Activated T-helper 1 cell treated with anti-CD3 and anti-CD28 coated beads, Interleukin-12 subunit alpha, Interleukin-12 subunit beta, Interleukin-2, Interleukin-4 antibody, amounts not matched to agents 30 ng/mL and 10 ng/mL and 1 ng/mL, durations not matched to agents 14 hours and 24 hours and 36 hours (primary cell): ENCODE measurements at regions of chr19 and their contacts with region 1.

Region 1: GRCh38 chr19:56066152-56067023 is 54.7 kb downstream of the ZNF787 start:
- DNase-seq: peak; percentile 51
- H3K4me3 Mint-ChIP-seq: peak overlapping the region; percentile 61
- H3K27ac Mint-ChIP-seq: no peak overlapping the region
- H3K4me1 Mint-ChIP-seq: peaks cover 11% of the 10 kb centered on the region
- H3K27me3 Mint-ChIP-seq: peaks cover 3% of the 10 kb centered on the region

Region 2: DNA sequence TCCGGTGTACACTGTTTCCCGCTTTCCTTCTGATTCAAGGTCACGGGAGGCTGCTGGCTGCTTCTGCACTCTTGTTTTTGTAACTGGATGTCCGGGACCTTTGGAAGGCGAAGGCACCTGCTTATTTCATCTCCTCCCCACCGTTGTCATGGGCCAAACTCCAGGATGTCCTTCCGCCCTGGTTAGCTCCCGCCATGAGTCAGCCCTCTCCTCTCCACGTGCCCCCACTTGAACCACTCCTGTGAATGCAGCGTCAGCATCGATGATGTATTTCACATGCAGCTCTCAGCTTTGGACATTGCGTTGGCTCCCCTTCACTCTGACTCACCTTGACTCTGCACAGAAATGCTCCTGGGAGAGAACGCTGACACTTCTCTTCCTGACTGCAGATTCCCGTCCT is 103.9 kb after region 1 on chr19:
- intact Hi-C with region 1: loop called (anchors 1 kb)
- DNase-seq: no peak
- H3K4me3 Mint-ChIP-seq: no peak overlapping the region
- H3K27ac Mint-ChIP-seq: no peak overlapping the region
- H3K4me1 Mint-ChIP-seq: no peaks in the 10 kb centered on the region
- H3K27me3 Mint-ChIP-seq: peaks cover 4% of the 10 kb centered on the region

Region 3: DNA sequence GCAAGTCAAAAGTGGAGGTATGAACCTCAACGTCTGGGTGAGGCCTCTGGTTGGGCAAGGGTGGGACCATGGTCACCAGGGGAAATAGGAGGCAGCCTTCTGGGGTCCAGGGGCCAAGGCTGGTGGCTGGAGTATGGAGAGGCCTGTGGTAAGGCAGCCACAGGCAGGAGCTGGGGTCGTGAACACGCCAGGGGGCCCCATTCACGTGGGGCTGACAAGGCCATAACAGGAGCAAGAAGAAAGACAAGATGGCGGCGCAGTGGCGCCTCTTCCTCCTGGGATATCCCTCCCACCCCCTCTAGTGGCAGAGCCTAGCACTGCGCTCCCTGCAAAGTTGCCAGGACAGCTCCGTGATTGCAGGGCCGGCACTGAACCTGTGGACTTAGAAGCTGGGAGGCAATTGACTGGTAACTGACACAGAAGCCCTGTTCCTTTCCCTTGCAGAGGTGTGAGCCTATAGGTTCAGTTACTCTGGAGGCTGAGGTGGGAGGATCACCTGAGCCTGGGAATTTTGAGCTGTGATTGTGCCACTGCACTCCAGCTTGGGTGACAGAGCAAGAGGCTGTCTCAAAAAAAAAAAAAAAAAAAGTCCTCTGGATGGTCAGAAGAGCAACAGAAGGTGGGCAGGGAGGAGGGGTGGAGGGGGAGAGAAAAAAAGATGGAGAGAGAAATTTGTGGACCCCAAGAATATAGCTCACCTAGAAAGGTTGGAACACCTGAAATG is 186.5 kb after region 1 on chr19:
- intact Hi-C with region 1: loop called (anchors 2 kb)
- DNase-seq: peak; percentile 45
- H3K4me3 Mint-ChIP-seq: no peak overlapping the region
- H3K27ac Mint-ChIP-seq: no peak overlapping the region
- H3K4me1 Mint-ChIP-seq: no peaks in the 10 kb centered on the region
- H3K27me3 Mint-ChIP-seq: no peaks in the 10 kb centered on the region

Region 4: DNA sequence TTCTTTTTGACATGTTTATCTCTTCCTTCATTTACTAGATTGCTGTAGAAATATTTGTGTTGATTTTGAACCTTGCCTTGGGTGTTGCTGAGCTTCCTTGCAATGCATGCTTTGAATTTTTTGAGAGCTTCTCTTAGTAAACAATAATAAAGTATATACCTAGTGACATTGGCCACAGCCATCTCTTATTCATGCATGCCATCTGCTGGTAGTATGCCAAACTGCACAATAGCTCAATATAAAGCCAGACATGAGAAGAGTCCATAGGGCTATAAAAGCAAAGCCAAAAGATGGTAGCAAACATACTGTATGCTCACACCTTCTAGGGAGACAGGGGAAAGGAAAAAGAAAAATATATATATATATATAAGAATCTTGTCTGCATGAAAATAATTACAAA is 267.1 kb after region 1 on chr19:
- intact Hi-C with region 1: loop called (anchors 1 kb)
- DNase-seq: peak; percentile 28
- H3K4me3 Mint-ChIP-seq: no peak overlapping the region
- H3K27ac Mint-ChIP-seq: no peak overlapping the region
- H3K4me1 Mint-ChIP-seq: no peaks in the 10 kb centered on the region
- H3K27me3 Mint-ChIP-seq: peaks cover 3% of the 10 kb centered on the region

Region 5: DNA sequence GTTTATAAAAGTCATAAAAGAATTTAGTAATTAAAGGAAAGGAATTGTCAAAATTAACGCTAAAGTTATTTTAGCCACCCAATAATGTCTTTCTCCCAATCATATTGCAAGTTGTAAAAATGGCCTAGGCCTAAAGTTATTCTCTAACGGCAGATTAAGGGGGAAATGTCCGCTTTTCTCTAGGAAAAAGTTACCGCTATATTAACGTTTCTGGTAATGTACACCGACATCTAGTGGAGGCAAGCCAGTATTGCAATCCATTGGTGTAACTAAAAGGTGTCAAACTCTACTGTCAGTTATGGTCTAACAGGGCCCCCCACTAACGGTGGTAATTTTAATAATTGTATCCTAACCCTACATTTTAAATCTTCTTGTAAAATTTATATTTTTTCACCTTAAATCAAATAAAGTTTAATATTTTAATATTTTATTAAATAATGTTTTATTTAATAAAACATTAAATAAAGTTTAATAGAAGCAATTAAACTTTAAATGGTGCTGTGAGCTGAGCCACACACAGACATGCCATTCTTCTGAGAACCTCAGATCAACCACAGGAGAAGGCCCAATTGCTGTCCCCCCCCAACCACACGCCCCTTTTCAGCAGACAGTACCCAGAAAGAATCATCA is 284.1 kb after region 1 on chr19:
- intact Hi-C with region 1: loop called (anchors 1 kb)
- DNase-seq: peak; percentile 16
- H3K4me3 Mint-ChIP-seq: no peak overlapping the region
- H3K27ac Mint-ChIP-seq: no peak overlapping the region
- H3K4me1 Mint-ChIP-seq: no peaks in the 10 kb centered on the region
- H3K27me3 Mint-ChIP-seq: no peaks in the 10 kb centered on the region

Region 6: DNA sequence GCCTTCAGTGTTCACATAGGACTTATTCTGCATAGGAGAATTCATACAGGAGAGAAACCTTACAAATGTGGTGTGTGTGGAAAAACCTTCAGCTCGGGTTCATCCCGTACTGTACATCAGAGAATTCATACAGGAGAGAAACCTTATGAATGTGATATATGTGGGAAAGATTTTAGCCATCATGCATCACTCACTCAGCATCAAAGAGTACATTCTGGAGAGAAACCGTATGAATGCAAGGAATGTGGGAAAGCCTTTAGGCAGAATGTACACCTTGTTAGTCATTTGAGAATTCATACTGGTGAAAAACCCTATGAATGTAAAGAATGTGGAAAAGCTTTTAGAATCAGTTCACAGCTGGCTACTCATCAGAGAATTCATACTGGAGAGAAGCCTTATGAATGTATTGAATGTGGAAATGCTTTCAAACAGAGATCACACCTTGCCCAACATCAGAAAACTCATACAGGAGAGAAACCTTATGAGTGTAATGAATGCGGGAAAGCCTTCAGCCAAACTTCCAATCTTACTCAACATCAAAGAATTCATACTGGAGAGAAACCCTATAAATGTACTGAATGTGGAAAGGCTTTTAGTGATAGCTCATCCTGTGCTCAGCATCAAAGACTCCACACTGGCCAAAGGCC is 458.9 kb after region 1 on chr19:
- intact Hi-C with region 1: no loop called
- DNase-seq: no peak
- H3K4me3 Mint-ChIP-seq: no peak overlapping the region
- H3K27ac Mint-ChIP-seq: no peak overlapping the region
- H3K4me1 Mint-ChIP-seq: no peaks in the 10 kb centered on the region
- H3K27me3 Mint-ChIP-seq: no peaks in the 10 kb centered on the region